ENCODE measurements at regions of chr1 and their contacts with region 1.

Region 1: GRCh38 chr1:44500181-44501046 is 95.4 kb downstream of the RNF220 start:
- DNase-seq: no peak
- ATAC-seq: peak; percentile 72

Region 2: DNA sequence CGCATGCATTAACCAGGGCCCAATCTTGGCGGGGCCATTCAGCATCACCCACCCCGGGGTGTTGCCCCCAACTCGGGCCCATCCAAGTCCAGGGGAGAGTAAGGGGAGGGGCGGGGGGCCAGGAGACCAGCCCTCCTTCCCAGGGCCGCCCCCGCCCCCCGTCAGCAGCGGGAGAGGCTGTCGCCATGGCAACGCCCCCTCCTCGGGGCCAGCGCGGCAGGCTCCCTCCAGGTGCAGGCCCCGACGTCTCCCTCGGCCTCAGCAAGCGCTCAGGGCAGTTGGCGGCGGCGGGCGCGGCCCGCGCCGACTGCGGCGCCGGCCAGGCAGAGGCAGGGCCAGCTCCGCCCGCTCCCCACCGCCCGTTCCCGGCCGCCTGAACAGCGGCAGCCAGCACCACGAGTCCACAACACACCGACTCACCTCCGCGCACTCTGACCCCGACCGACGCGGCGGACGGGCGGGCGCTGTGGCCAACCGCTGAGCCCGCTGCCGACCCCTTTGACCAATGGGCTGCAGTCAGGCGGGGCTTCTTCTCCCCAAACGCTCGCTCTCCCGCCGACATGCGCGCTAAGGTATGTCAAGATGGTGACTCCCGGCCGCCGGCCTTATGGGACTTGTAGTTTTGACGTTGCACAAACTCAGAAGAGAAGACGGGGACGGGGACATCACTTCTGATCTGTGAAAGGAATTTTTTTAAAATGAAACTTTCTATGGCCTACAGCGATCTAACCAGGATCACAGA is 145.4 kb before region 1 on chr1 and contains the start of gene ERI3:
- intact Hi-C with region 1: no loop called
- DNase-seq: peak; percentile 98
- ATAC-seq: peak; percentile 100
- total RNA-seq, gene ERI3: 52.3 TPM

Region 3: DNA sequence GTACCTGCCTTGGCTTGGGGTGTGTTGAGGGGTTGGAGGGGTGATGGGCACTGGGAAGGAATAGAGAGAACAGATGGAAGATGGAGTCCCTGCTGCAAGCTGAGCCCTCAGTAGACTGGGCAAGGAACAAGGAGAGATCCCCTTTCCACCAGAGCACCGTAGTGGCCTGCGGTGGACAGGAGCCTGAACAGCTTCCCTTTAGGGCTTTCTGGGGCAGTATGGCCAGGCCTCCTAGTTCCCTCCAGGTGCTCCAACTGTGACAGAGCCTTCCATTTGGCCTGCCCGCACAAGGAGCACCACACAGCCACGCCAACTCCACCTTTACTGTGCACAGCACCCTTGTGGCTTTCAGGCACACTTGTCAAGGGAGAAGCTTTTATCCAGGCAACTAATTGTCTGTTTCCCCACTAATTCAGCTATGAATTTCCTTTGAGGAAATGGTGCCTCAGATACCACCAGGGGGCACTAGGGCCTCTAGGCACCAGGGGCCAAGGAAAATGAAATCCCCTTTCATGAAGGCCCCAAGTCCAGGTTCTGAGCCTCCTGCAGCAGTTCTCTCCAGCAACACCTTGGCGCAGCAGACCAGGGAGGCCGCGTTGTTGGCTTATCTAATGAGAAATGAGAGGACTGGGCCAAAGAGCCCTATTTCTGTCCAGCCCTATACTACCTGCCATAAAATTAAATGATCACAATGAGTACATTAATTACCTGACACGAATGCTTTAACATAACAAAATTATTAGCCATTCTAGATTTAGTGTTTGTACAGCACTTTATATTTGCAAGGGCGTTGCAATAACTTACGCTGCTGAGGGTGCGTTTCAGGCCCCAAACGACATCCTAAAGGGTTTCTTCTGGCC is 122.3 kb before region 1 on chr1:
- intact Hi-C with region 1: loop called (anchors 10 kb)
- DNase-seq: no peak
- ATAC-seq: peak; percentile 51

Region 4: DNA sequence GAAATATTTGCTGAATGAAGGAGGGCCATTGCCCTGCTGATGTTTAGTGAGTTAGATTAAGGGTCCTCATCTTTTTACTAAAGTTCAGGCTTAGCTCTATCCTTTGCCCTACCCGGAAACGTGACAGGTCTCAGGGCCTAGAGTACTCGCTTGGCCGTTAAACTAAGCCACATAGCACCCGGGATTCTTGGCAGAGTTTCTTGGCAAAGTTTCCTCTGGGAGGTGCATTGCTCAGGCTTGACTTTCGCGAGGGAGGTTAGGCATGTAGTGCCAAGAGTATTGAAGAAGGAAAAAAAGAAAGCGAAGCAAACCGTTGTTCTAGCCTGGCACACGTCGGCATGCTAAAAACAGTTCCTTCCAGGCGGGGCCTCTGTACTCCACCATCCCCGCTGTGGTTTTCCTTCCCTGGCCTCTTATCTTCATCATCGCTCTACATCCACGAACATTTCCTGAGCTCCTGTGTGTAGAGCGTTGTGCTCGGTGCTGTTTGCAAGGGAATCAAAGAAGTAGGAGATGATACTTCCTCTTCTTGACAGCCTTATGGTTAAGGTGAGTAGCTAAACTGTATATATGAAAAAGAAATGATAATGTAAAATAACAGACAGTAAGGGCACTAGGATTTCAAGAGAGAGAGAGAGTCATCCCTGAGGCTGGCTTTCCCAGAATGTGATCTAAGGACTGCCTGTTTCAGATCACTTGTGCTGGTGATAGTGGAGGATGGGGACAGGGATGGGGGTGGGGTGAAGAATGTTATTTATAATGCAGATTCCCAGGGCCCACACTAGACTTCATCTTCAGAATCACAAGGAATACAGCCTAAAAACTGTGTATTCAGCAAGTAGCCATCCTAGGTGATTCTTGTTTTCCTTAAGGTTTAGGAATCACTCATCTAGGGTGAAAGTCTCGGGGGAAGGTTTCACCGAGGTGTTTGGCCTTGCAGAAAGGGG is 76.5 kb before region 1 on chr1:
- intact Hi-C with region 1: loop called (anchors 10 kb)
- DNase-seq: peak; percentile 66
- ATAC-seq: peak; percentile 95

Region 5: DNA sequence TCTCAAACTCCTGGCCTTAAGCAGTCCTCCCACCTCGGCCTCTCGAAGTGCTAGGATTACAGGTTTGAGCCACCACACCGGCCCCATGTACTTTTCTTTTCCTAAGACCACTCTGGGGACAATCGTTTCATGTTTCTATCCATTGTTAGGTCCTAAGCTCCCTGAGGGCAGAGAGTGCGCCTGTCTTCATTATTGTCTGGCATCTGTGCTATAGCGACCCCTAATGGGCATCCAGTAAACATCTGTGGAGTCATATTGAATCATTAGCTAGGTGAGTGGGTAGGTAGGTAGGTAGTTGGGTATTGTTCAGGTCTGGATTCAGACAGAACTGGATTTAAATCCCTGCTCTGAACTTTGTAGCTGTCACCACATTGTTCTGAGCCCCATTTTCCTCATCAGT is 107.7 kb after region 1 on chr1:
- intact Hi-C with region 1: no loop called
- DNase-seq: no peak
- ATAC-seq: no peak

Measured in Right ventricle myocardium superior (tissue), 1 donor.